ENCODE measurements at regions of chr7 and their contacts with region 1.

Region 1: GRCh38 chr7:5780801-5781496 is 514 bp downstream of the RNF216 start:
- DNase-seq: peak; percentile 7 to 62 (median 42)
- ATAC-seq: peak; percentile 10
- H3K4me3 ChIP-seq: peak overlapping the region; percentile 55 to 60
- H3K4me3 Mint-ChIP-seq: peak overlapping the region; percentile 87
- H3K27ac ChIP-seq: peak overlapping the region; percentile 55 to 71
- H3K27ac Mint-ChIP-seq: peak overlapping the region; percentile 87
- H3K4me1 ChIP-seq: peaks cover 34% of the 10 kb centered on the region
- H3K4me1 Mint-ChIP-seq: peaks cover 38% of the 10 kb centered on the region
- H3K27me3 ChIP-seq: no peaks in the 10 kb centered on the region
- H3K27me3 Mint-ChIP-seq: no peaks in the 10 kb centered on the region
- CTCF ChIP-seq: no peak

Region 2: GRCh38 chr7:5755704-5756504 is 25.0 kb before region 1 on chr7:
- CTCF ChIA-PET with region 1: no interaction called
- POLR2A ChIA-PET with region 1: no interaction called
- intact Hi-C with region 1: no loop called
- DNase-seq: no peak
- ATAC-seq: no peak
- H3K4me3 ChIP-seq: no peak overlapping the region
- H3K4me3 Mint-ChIP-seq: no peak overlapping the region
- H3K27ac ChIP-seq: no peak overlapping the region
- H3K27ac Mint-ChIP-seq: no peak overlapping the region
- H3K4me1 ChIP-seq: no peaks in the 10 kb centered on the region
- H3K4me1 Mint-ChIP-seq: peaks cover 14% of the 10 kb centered on the region
- H3K27me3 ChIP-seq: no peaks in the 10 kb centered on the region
- H3K27me3 Mint-ChIP-seq: no peaks in the 10 kb centered on the region
- CTCF ChIP-seq: no peak

Region 3: GRCh38 chr7:5822742-5823503 is 42.0 kb after region 1 on chr7:
- CTCF ChIA-PET with region 1: interaction called, 6 read pairs
- POLR2A ChIA-PET with region 1: interaction called, 12 read pairs
- intact Hi-C with region 1: loop called (anchors 1 kb)
- DNase-seq: peak; percentile 95 to 100 (median 98)
- ATAC-seq: peak; percentile 81
- H3K4me3 ChIP-seq: peak overlapping the region; percentile 88 to 99
- H3K4me3 Mint-ChIP-seq: peak overlapping the region; percentile 91
- H3K27ac ChIP-seq: peak overlapping the region; percentile 91 to 96
- H3K27ac Mint-ChIP-seq: peak overlapping the region; percentile 91
- H3K4me1 ChIP-seq: peaks cover 29% of the 10 kb centered on the region
- H3K4me1 Mint-ChIP-seq: peaks cover 27% of the 10 kb centered on the region
- H3K27me3 ChIP-seq: no peaks in the 10 kb centered on the region
- H3K27me3 Mint-ChIP-seq: no peaks in the 10 kb centered on the region
- CTCF ChIP-seq: no peak

Region 4: GRCh38 chr7:6106140-6106904 is 325.4 kb after region 1 on chr7:
- CTCF ChIA-PET with region 1: no interaction called
- POLR2A ChIA-PET with region 1: no interaction called
- intact Hi-C with region 1: loop called in 1 of 2 experiments (anchors 2 kb)
- DNase-seq: peak in 6 of 9 experiments; percentile 12 to 76 (median 32)
- ATAC-seq: no peak
- H3K4me3 ChIP-seq: peak overlapping the region; percentile 62 to 70
- H3K4me3 Mint-ChIP-seq: peak overlapping the region; percentile 86
- H3K27ac ChIP-seq: peak overlapping the region; percentile 67 to 88
- H3K27ac Mint-ChIP-seq: peak overlapping the region; percentile 91
- H3K4me1 ChIP-seq: peaks cover 15% of the 10 kb centered on the region
- H3K4me1 Mint-ChIP-seq: peaks cover 42% of the 10 kb centered on the region
- H3K27me3 ChIP-seq: no peaks in the 10 kb centered on the region
- H3K27me3 Mint-ChIP-seq: no peaks in the 10 kb centered on the region
- CTCF ChIP-seq: peak; percentile 29

Measured in CD8-positive, alpha-beta T cell (primary cell).